ENCODE measurements at regions of chr5 and their contacts with region 1.

Region 1: DNA sequence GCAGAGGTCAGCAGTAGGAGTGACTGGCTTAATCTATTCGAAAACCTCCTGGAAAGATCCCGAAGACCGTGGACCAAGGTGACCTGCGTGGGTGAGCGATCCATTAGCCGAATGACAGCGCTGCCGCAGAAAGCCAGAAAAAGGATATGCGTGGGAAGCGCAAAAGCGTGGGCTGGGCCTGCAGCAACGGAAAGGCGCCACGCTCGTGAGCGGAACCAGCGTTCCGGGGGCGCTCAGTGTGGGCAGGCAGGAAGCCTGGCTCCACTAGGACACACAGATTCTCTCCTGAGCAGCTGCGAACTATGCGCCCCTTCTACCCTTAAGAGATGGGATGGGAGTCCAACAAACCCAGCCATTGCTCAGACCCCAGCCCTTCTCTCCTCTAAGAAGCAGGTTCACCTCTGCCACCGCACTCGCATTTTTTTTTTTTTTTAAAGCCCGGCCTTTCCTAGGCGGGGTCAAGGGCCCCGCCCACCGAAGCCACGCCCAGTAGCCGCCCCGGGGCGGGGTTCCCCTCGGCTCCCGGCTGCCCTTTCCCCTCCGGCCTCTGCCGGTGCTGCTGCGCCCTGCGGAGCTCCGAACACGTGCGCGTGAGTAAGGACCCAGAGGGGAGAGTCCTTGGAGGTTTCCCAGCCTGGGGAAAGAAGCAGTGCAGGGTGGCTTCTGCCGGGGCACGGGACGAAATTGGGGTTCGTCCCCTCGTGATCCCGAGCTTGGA is 19.8 kb upstream of the MATR3 start:
- DNase-seq: peak; percentile 96
- H3K4me3 Mint-ChIP-seq: peak overlapping the region; percentile 94
- H3K27ac Mint-ChIP-seq: peak overlapping the region; percentile 3
- H3K4me1 Mint-ChIP-seq: peaks cover 46% of the 10 kb centered on the region
- H3K27me3 Mint-ChIP-seq: no peaks in the 10 kb centered on the region
- CTCF ChIP-seq: no peak

Region 2: DNA sequence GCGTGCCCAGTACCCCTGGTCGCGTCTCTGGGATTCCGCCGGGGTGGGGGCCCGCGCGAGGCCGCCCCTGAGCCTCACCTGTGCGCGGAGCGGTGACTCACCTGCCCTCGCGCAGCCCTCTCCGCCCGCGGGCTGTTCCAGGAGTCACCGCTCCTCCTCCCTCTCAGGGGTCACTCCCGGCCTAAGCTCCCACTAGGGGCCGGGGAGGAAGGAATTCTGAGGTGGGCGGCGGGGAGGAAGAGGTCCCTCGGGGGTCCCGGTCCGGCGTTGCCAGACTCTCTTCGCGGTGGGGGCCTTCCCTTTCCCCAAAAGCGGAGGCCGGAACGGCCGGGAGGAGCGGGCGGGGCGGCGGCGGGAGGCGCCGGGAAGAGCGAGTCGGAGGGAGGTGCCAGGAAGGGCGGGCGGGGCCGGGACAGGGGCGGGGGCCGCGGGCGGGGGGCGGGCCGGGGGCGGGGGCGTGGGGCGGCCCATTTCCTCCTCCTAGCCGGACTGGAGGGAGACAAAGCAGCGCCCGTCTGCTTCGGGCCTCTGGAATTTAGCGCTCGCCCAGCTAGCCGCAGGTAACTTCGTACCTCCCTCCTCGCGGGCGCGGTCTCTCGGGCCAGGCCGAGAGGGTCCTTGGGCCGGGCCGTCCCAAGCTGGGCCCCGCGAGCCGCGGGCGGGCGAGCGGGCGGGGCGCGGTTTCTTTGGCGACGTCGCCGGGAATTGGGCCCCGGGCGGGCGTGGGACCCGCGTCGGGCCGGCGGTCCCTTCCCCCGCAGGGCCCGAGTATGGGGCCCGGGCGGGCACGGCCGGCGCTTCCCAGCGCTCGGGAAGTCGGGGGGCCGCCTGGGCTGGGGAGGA is 520.6 kb before region 1 on chr5 and contains the start of gene CTNNA1:
- CTCF ChIA-PET with region 1: no interaction called
- intact Hi-C with region 1: loop called (anchors 5 kb)
- DNase-seq: peak; percentile 94
- H3K4me3 Mint-ChIP-seq: peak within 1 kb of the TSS; percentile 89
- H3K27ac Mint-ChIP-seq: peak within 1 kb of the TSS; percentile 95
- H3K4me1 Mint-ChIP-seq: peaks cover 55% of the 10 kb centered on the region
- H3K27me3 Mint-ChIP-seq: no peaks in the 10 kb centered on the region
- CTCF ChIP-seq: no peak
- total RNA-seq, gene CTNNA1: 623 and 734 TPM in 2 replicates

Region 3: GRCh38 chr5:139262742-139263445 is 10.8 kb before region 1 on chr5:
- CTCF ChIA-PET with region 1: interaction called, 11 read pairs
- intact Hi-C with region 1: no loop called
- DNase-seq: peak; percentile 92
- H3K4me3 Mint-ChIP-seq: no peak overlapping the region
- H3K27ac Mint-ChIP-seq: no peak overlapping the region
- H3K4me1 Mint-ChIP-seq: peaks cover 8% of the 10 kb centered on the region
- H3K27me3 Mint-ChIP-seq: peaks cover 34% of the 10 kb centered on the region
- CTCF ChIP-seq: peak; percentile 75

Region 4: DNA sequence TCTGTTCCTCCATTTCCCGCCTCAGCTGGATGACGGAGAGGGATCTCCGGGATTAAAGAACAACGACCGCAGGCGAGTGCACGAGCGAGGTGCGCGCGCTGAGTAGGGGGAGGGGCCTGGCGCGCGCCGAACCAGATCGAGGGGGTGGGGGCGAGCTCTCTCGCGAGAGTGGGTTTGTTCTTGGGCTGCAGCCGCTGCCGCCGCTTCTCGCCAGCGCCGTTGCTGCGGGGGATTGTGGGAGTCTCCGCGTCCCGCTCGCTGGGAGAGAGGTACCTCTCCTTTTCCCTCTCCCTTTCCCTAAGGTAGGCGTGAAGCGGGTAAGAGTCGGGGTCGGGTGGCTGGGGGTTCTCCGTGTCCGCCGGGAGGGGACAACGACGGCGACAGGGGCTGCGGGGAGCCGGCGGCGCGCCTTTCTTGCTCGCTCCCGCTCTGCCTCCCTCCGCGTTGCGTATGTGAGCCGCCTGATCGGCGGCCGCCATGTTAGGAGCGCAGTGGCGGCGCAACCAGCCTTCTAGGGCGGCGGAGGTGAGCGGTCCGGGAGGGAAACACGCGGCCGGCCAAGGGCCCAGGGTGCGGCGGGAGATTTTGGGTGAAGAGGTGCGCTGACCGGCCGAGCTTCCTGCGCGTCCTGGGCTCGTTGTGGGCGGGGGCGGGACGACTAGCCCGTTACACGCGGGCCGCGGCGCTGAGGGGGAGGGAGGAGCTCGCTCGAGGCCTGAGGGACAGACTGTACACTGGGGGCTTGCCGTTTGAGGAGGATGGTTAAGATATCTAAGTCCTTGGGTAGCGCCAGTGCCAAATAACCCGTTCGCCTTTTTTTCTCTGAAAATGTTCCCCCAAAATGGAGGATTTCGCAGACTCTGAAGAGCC is 20.0 kb after region 1 on chr5 and contains the start of gene MATR3:
- CTCF ChIA-PET with region 1: interaction called, 12 read pairs
- intact Hi-C with region 1: no loop called
- DNase-seq: peak; percentile 98
- H3K4me3 Mint-ChIP-seq: peak within 1 kb of the TSS; percentile 98
- H3K27ac Mint-ChIP-seq: peak within 1 kb of the TSS; percentile 98
- H3K4me1 Mint-ChIP-seq: peaks cover 35% of the 10 kb centered on the region
- H3K27me3 Mint-ChIP-seq: no peaks in the 10 kb centered on the region
- CTCF ChIP-seq: no peak
- total RNA-seq, gene MATR3: 228 and 230 TPM in 2 replicates